Naive thymus-derived CD4-positive, alpha-beta T cell (primary cell): ENCODE measurements at regions of chrX and their contacts with region 1.

Region 1: GRCh38 chrX:77617206-77617605 is 168.8 kb downstream of the ATRX start:
- DNase-seq: no peak
- ATAC-seq: no peak
- H3K4me3 ChIP-seq: no peak overlapping the region
- H3K4me3 Mint-ChIP-seq: no peak overlapping the region
- H3K27ac ChIP-seq: no peak overlapping the region
- H3K27ac Mint-ChIP-seq: peak overlapping the region in 4 of 9 donors; percentile 13 to 65 (median 33)
- H3K4me1 ChIP-seq: no peaks in the 10 kb centered on the region
- H3K4me1 Mint-ChIP-seq: peaks cover 0 to 8% (median 0%) of the 10 kb centered on the region in 7 donors
- H3K27me3 ChIP-seq: no peaks in the 10 kb centered on the region
- H3K27me3 Mint-ChIP-seq: no peaks in the 10 kb centered on the region

Region 2: DNA sequence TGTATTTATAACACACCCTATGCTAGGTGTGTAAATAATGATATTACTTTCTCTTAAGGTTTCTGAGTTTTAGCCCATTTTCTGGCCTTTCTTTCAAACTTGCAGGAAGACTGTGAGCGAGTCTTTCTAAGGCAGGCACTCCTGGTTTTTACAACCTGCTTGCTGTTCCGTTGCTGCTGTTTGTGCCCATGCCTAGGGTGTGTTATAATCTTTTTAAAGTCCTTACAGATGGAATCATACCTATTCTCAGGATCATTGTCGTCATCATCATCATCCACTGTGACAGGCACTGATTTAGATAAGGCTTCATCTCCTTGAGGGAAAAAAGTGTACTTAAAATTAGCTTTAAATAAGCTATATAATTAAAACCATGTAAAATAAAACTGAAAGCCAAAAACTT is 58.8 kb after region 1 on chrX:
- CTCF ChIA-PET with region 1: no interaction called
- POLR2A ChIA-PET with region 1: no interaction called
- intact Hi-C with region 1: loop called in 1 of 2 experiments (anchors 10 kb)
- DNase-seq: no peak
- ATAC-seq: no peak
- H3K4me3 ChIP-seq: no peak overlapping the region
- H3K4me3 Mint-ChIP-seq: no peak overlapping the region
- H3K27ac ChIP-seq: no peak overlapping the region
- H3K27ac Mint-ChIP-seq: no peak overlapping the region
- H3K4me1 ChIP-seq: no peaks in the 10 kb centered on the region
- H3K4me1 Mint-ChIP-seq: peaks cover 0 to 3% (median 0%) of the 10 kb centered on the region in 7 donors
- H3K27me3 ChIP-seq: no peaks in the 10 kb centered on the region
- H3K27me3 Mint-ChIP-seq: no peaks in the 10 kb centered on the region

Region 3: GRCh38 chrX:77768787-77769186 is 151.6 kb after region 1 on chrX:
- CTCF ChIA-PET with region 1: no interaction called
- POLR2A ChIA-PET with region 1: no interaction called
- intact Hi-C with region 1: loop called in 1 of 2 experiments (anchors 10 kb)
- DNase-seq: peak in 3 of 9 donors; percentile 12 to 28 (median 22)
- ATAC-seq: peak; percentile 41
- H3K4me3 ChIP-seq: no peak overlapping the region
- H3K4me3 Mint-ChIP-seq: peak overlapping the region in 9 of 10 donors; percentile 7 to 79 (median 57)
- H3K27ac ChIP-seq: no peak overlapping the region
- H3K27ac Mint-ChIP-seq: peak overlapping the region; percentile 0 to 86 (median 25)
- H3K4me1 ChIP-seq: peaks cover 0 to 5% of the 10 kb centered on the region in 2 donors
- H3K4me1 Mint-ChIP-seq: peaks cover 16 to 49% (median 37%) of the 10 kb centered on the region in 7 donors
- H3K27me3 ChIP-seq: no peaks in the 10 kb centered on the region
- H3K27me3 Mint-ChIP-seq: no peaks in the 10 kb centered on the region